OCI-LY7 (cell line): ENCODE measurements at regions of chrX and their contacts with region 1.

Region 1: DNA sequence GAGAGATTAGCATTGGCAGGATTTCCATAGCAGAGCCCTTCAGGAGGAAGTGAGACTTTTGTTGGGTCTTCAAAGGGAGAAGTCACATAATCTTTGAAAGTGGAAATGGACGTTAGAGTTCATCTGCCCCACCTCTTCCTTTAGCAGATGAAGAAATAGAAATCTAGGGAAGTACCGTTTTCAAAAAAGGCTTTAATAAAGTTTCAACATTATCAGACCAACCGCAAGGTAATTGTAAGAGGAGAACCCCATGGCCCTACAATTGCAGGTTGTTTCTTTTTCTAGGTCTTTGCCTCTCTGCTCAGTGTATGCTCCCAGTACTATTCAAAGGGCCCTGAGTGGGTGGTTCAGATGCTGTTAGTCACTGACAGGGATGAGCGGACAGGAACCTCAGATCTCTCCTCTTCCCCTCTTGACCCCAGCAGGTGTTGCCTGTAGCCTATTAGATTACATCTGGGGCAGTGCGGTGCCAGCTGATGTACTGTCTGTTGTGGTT is 48.6 kb upstream of the AP1S2 start:
- DNase-seq: peak; percentile 87
- H3K4me3 ChIP-seq: peak overlapping the region; percentile 50
- H3K27ac ChIP-seq: peak overlapping the region; percentile 99
- H3K4me1 ChIP-seq: peaks cover 44% of the 10 kb centered on the region
- CTCF ChIP-seq: no peak

Region 2: GRCh38 chrX:15977644-15978043 is 74.4 kb after region 1 on chrX:
- CTCF ChIA-PET with region 1: no interaction called
- POLR2A ChIA-PET with region 1: no interaction called
- intact Hi-C with region 1: no loop called
- DNase-seq: no peak
- H3K4me3 ChIP-seq: no peak overlapping the region
- H3K27ac ChIP-seq: no peak overlapping the region
- H3K4me1 ChIP-seq: no peaks in the 10 kb centered on the region
- CTCF ChIP-seq: no peak

Region 3: DNA sequence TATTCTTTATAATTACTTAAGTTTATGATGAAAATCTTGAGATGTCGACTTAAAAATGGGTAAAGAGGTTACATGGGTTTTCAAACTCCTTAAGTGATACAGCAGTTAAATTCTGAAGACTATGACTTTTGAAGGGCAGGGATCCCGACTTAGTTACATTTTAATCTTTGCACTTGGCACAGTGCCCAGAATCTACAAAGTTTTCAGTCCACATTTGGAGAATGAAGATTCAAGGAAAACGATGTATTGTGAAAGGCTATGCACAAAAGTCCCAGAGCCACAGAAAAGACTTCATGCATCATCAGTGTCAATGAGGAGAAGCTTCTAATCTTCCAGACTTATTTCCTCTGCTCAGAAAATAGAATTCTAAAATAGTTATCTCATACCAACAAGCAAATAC is 183.8 kb after region 1 on chrX:
- CTCF ChIA-PET with region 1: no interaction called
- POLR2A ChIA-PET with region 1: no interaction called
- intact Hi-C with region 1: no loop called
- DNase-seq: no peak
- H3K4me3 ChIP-seq: no peak overlapping the region
- H3K27ac ChIP-seq: no peak overlapping the region
- H3K4me1 ChIP-seq: no peaks in the 10 kb centered on the region
- CTCF ChIP-seq: no peak

Region 4: DNA sequence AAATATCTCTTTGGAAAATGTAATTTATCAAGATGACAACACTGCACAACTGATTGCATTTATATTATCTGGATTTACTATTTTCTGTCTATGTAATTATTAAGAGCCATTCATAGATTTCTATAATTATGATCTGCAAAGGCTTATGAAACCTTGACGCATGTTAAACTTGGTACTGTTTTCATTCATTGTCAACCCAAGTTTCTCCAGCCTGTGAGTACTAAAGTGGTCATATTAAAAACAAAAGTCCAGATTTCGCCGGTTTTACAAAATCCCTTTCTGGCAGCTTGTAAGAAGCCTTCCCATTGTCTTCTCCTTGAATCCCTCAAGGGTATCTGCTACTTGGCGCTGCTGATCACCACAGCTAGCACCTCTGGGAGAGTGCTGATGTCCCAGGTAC is 200.4 kb after region 1 on chrX:
- CTCF ChIA-PET with region 1: no interaction called
- POLR2A ChIA-PET with region 1: no interaction called
- intact Hi-C with region 1: loop called (anchors 1 kb)
- DNase-seq: no peak
- H3K4me3 ChIP-seq: peak overlapping the region; percentile 30
- H3K27ac ChIP-seq: peak overlapping the region; percentile 96
- H3K4me1 ChIP-seq: peaks cover 61% of the 10 kb centered on the region
- CTCF ChIP-seq: no peak

Region 5: GRCh38 chrX:16123222-16123786 is 220.1 kb after region 1 on chrX and contains the start of gene GRPR:
- CTCF ChIA-PET with region 1: no interaction called
- POLR2A ChIA-PET with region 1: no interaction called
- intact Hi-C with region 1: loop called (anchors 5 kb)
- DNase-seq: peak; percentile 89
- H3K4me3 ChIP-seq: no peak within 1 kb of the TSS
- H3K27ac ChIP-seq: peak within 1 kb of the TSS; percentile 13
- H3K4me1 ChIP-seq: peaks cover 82% of the 10 kb centered on the region
- CTCF ChIP-seq: peak; percentile 78
- total RNA-seq, gene GRPR: 0.47 TPM in 1 of 2 replicates, not detected in the other